Panc1 (cell line): ENCODE measurements at regions of chr2 and their contacts with region 1.

Region 1: GRCh38 chr2:237408335-237409000 is 5.5 kb downstream of the COL6A3 start:
- DNase-seq: no peak
- ATAC-seq: no peak
- H3K4me3 ChIP-seq: no peak overlapping the region
- H3K27ac ChIP-seq: peak overlapping the region; percentile 36; the same call in 1 of the 2 replicates
- H3K4me1 ChIP-seq: 0 out of 2 replicates have a peak, but pooled peaks cover 4% of the 10 kb centered on the region
- H3K27me3 ChIP-seq: no peaks in the 10 kb centered on the region
- CTCF ChIP-seq: no peak

Region 2: GRCh38 chr2:237154082-237154638 is 254.3 kb before region 1 on chr2:
- CTCF ChIA-PET with region 1: interaction called, 7 read pairs
- POLR2A ChIA-PET with region 1: no interaction called
- in situ Hi-C with region 1: no loop called
- intact Hi-C with region 1: loop called (anchors 10 kb)
- DNase-seq: no peak
- ATAC-seq: peak; percentile 74
- H3K4me3 ChIP-seq: no peak overlapping the region
- H3K27ac ChIP-seq: peak overlapping the region; percentile 55
- H3K4me1 ChIP-seq: no peaks in the 10 kb centered on the region; the same call in 1 of the 2 replicates
- H3K27me3 ChIP-seq: no peaks in the 10 kb centered on the region
- CTCF ChIP-seq: peak; percentile 90

Region 3: GRCh38 chr2:237165405-237166276 is 242.8 kb before region 1 on chr2:
- CTCF ChIA-PET with region 1: interaction called, 11 read pairs
- POLR2A ChIA-PET with region 1: no interaction called
- in situ Hi-C with region 1: no loop called
- intact Hi-C with region 1: loop called (anchors 5 kb)
- DNase-seq: no peak
- ATAC-seq: peak; percentile 51; the same call in 1 of the 2 replicates
- H3K4me3 ChIP-seq: no peak overlapping the region
- H3K27ac ChIP-seq: peak overlapping the region; percentile 34; the same call in 1 of the 2 replicates
- H3K4me1 ChIP-seq: no peaks in the 10 kb centered on the region
- H3K27me3 ChIP-seq: no peaks in the 10 kb centered on the region
- CTCF ChIP-seq: peak; percentile 69

Region 4: GRCh38 chr2:237262838-237263771 is 145.4 kb before region 1 on chr2:
- CTCF ChIA-PET with region 1: no interaction called
- POLR2A ChIA-PET with region 1: no interaction called
- in situ Hi-C with region 1: no loop called
- intact Hi-C with region 1: no loop called
- DNase-seq: peak; percentile 27
- ATAC-seq: no peak
- H3K4me3 ChIP-seq: no peak overlapping the region
- H3K27ac ChIP-seq: peak overlapping the region; percentile 81
- H3K4me1 ChIP-seq: peaks cover 12% of the 10 kb centered on the region
- H3K27me3 ChIP-seq: no peaks in the 10 kb centered on the region
- CTCF ChIP-seq: no peak

Region 5: GRCh38 chr2:237904801-237905599 is 496.5 kb after region 1 on chr2:
- CTCF ChIA-PET with region 1: no interaction called
- POLR2A ChIA-PET with region 1: no interaction called
- in situ Hi-C with region 1: no loop called
- intact Hi-C with region 1: no loop called
- DNase-seq: no peak
- ATAC-seq: no peak
- H3K4me3 ChIP-seq: no peak overlapping the region
- H3K27ac ChIP-seq: no peak overlapping the region
- H3K4me1 ChIP-seq: no peaks in the 10 kb centered on the region
- H3K27me3 ChIP-seq: no peaks in the 10 kb centered on the region
- CTCF ChIP-seq: no peak

Region 6: DNA sequence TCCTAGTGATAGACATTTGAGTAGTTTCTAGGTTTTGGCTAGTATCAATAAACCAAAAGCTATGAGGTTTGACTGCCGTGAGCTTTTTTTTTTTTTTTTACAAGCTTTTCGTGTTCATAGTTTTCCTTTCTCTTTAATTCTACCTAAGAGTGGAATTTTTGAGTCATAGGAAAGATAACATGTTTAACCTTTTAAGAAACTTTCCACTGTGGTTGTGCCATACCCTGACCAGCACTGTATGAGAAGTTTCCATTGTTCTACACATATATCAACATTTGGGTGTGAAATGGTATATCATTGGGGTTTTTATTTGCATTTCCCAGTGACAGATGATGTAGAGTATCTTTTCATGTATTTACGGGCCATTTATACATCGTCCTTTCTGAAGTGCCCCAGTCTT is 590.1 kb after region 1 on chr2:
- CTCF ChIA-PET with region 1: no interaction called
- POLR2A ChIA-PET with region 1: no interaction called
- in situ Hi-C with region 1: no loop called
- intact Hi-C with region 1: no loop called
- DNase-seq: no peak
- ATAC-seq: no peak
- H3K4me3 ChIP-seq: no peak overlapping the region
- H3K27ac ChIP-seq: no peak overlapping the region
- H3K4me1 ChIP-seq: no peaks in the 10 kb centered on the region
- H3K27me3 ChIP-seq: no peaks in the 10 kb centered on the region
- CTCF ChIP-seq: no peak